ENCODE measurements at regions of chr18 and their contacts with region 1.

Region 1: GRCh38 chr18:56789004-56789888 is 138.1 kb downstream of the WDR7 start:
- H3K4me3 ChIP-seq: no peak overlapping the region
- H3K27ac ChIP-seq: no peak overlapping the region
- H3K4me1 ChIP-seq: no peaks in the 10 kb centered on the region
- CTCF ChIP-seq: no peak

Region 2: DNA sequence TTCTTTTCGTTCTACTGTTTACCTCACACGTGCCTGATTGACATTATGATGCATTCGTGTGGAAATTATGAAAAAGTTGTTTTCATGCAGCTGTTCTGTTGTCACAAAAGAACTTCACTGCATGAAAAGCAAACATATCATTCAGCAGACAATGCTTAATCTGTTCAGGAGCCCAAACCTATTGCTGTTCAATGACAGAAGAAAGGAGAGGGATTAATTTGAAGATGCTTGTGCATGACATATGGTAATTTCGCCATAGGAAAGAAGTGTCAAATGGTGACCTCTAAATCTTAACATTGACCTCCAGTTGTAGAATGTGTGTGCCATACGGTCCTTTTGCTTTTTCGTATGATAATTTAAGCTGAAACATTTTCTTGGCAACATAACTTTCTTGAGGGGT is 13.5 kb before region 1 on chr18:
- CTCF ChIA-PET with region 1: interaction called, 10 read pairs
- POLR2A ChIA-PET with region 1: no interaction called
- H3K4me3 ChIP-seq: no peak overlapping the region
- H3K27ac ChIP-seq: no peak overlapping the region
- H3K4me1 ChIP-seq: no peaks in the 10 kb centered on the region
- CTCF ChIP-seq: no peak

Region 3: DNA sequence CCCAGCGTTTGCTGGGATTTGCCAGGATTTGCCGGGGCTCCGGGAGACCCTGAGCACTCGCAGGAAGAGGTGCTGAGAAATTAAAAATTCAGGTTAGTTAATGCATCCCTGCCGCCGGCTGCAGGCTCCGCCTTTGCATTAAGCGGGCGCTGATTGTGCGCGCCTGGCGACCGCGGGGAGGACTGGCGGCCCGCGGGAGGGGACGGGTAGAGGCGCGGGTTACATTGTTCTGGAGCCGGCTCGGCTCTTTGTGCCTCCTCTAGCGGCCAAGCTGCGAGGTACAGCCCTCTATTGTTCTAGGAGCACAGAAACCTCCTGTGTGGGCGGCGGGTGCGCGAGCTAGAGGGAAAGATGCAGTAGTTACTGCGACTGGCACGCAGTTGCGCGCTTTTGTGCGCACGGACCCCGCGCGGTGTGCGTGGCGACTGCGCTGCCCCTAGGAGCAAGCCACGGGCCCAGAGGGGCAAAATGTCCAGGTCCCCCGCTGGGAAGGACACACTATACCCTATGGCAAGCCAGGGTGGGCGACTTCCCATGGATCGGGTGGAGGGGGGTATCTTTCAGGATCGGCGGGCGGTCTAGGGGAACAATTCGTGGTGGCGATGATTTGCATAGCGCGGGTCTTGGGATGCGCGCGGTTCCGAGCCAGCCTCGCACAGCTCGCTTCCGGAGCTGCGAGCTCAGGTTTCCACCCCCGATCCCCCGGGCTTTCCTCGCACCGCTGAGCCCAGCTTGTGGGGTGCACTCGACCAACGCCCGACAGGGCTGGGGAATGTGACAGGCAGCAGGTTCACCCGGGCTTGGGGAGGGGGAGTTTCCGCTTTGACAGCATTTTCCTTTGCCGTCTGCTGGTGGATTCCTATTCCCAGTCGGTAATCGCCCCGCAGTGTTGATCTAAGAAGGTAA is 648.8 kb after region 1 on chr18:
- CTCF ChIA-PET with region 1: interaction called, 12 read pairs
- POLR2A ChIA-PET with region 1: no interaction called
- H3K4me3 ChIP-seq: peak overlapping the region; percentile 65
- H3K27ac ChIP-seq: peak overlapping the region; percentile 49; the same call in 1 of the 2 replicates
- H3K4me1 ChIP-seq: peaks cover 6% of the 10 kb centered on the region
- CTCF ChIP-seq: peak; percentile 87

Region 4: GRCh38 chr18:58241877-58242276 is 1452.6 kb after region 1 on chr18:
- CTCF ChIA-PET with region 1: no interaction called
- POLR2A ChIA-PET with region 1: no interaction called
- H3K4me3 ChIP-seq: no peak overlapping the region
- H3K27ac ChIP-seq: no peak overlapping the region
- H3K4me1 ChIP-seq: peaks cover 25% of the 10 kb centered on the region
- CTCF ChIP-seq: no peak

Measured in HEK293 (cell line).